MCF 10A (cell line): ENCODE measurements at regions of chr10 and their contacts with region 1.

Region 1: DNA sequence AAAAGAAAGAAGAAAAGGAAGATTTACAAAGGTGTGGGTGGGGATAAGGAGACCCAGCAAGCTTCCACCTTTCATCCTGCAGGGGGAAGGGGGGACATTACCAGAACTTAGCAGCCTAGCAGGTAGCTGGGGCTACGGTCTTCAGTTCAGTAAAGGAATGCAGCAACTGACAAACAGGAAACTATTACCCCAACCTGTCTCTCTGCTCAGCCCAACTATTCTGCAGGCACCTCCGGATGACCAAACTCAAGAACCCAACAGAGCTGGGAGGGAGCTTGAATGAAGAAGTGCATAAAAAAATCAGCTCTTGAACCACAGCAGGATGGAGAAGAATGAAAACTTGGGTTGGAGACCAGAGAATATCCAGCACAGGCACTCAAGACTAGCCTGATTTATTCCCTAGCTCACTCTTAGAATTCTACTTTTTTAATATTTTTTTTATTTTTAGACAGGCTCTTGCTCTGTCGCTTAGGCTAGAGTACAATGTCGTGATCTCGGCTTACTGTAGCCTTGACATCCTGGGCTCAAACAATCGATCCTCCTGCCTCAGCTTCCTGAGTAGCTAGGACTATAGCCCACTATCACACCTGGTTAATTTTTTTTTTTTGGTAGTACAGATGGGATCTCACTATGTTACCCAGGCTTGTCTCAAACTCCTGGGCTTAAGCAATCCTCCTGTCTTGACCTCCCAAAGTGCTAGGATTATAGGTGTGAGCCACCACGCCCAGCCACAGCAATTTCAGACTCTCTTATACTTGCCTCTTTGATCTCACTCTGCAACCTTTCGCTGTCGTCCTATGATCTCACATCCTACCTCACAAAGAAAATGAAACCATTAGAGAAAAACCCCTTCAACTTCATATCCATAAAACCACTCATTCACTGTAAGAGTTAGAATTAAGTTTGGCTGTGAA is 18.5 kb upstream of the C10orf67 start:
- DNase-seq: no peak
- H3K4me3 Mint-ChIP-seq: no peak overlapping the region
- H3K27ac Mint-ChIP-seq: no peak overlapping the region
- H3K4me1 Mint-ChIP-seq: peaks cover 24% of the 10 kb centered on the region
- H3K27me3 Mint-ChIP-seq: no peaks in the 10 kb centered on the region
- CTCF ChIP-seq: no peak

Region 2: DNA sequence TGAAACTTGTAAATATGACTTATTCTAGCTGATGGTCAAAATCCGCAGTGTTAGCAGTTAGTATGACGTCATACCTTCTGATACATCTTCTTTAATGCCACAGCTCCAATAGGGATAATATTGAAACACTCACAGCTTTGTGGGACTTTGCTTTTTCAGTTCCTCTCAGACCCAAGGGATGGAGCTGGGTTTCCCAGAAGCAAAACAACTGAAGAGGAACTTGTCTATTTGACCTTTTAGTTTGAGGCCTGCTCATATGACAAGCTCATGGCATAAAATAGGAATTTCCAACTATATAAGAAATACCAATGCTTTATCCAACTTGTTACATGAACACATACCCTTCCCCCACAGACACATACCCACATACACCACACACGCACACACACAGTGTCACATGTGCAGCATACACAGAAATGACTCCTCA is 13.1 kb after region 1 on chr10:
- CTCF ChIA-PET with region 1: interaction called, 3 read pairs
- POLR2A ChIA-PET with region 1: interaction called, 14 read pairs
- intact Hi-C with region 1: no loop called
- DNase-seq: no peak
- H3K4me3 Mint-ChIP-seq: no peak overlapping the region
- H3K27ac Mint-ChIP-seq: no peak overlapping the region
- H3K4me1 Mint-ChIP-seq: peaks cover 22% of the 10 kb centered on the region
- H3K27me3 Mint-ChIP-seq: no peaks in the 10 kb centered on the region
- CTCF ChIP-seq: no peak

Region 3: DNA sequence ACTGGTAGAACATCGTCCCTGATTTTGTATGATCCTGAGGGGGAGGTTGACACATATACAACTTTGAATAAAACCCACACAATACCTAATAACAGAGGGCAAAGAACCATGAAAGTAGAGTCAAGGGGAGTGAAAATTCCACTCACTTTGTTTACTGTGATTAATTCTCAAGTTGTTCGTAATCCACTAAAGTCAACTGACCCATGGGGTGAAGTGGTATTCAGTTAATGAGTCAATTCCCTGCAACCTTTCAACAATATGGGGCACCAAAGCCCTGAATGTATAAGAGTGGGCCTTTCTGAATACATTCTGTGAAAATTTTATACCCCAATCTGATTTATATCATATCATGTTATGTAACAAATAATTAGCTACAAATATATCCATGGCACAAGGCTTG is 20.5 kb after region 1 on chr10:
- CTCF ChIA-PET with region 1: interaction called, 3 read pairs
- POLR2A ChIA-PET with region 1: interaction called, 14 read pairs
- intact Hi-C with region 1: no loop called
- DNase-seq: no peak
- H3K4me3 Mint-ChIP-seq: no peak overlapping the region
- H3K27ac Mint-ChIP-seq: peak overlapping the region; percentile 12
- H3K4me1 Mint-ChIP-seq: peaks cover 9% of the 10 kb centered on the region
- H3K27me3 Mint-ChIP-seq: no peaks in the 10 kb centered on the region
- CTCF ChIP-seq: no peak